MCF 10A (cell line): ENCODE measurements at regions of chr1 and their contacts with region 1.

Region 1: DNA sequence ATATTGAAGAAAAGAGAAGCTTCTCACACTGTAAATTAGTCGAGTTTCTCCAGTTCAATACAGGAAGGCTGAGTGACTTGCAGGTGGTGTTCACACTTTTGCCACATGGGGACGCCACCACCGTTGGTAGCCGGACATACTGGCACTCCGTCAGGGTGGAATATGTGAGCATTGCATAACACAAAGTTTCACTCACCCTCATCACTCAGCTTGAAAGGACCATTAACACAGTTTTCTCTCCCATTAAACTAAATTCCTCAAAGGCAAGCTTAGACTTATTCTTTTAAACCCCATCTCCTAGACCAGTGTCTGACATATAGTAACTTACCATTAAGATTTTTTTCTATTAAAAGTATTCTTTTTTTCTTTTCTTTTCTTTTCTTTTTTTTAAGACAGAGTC is 105.3 kb upstream of the SERBP1 start:
- DNase-seq: peak; percentile 85
- H3K4me3 Mint-ChIP-seq: no peak overlapping the region
- H3K27ac Mint-ChIP-seq: peak overlapping the region; percentile 12
- H3K4me1 Mint-ChIP-seq: peaks cover 6% of the 10 kb centered on the region
- H3K27me3 Mint-ChIP-seq: no peaks in the 10 kb centered on the region
- CTCF ChIP-seq: peak; percentile 95

Region 2: GRCh38 chr1:67393240-67393639 is 142.2 kb before region 1 on chr1:
- CTCF ChIA-PET with region 1: no interaction called
- POLR2A ChIA-PET with region 1: no interaction called
- intact Hi-C with region 1: no loop called
- DNase-seq: no peak
- H3K4me3 Mint-ChIP-seq: no peak overlapping the region
- H3K27ac Mint-ChIP-seq: no peak overlapping the region
- H3K4me1 Mint-ChIP-seq: peaks cover 12% of the 10 kb centered on the region
- H3K27me3 Mint-ChIP-seq: no peaks in the 10 kb centered on the region
- CTCF ChIP-seq: no peak

Region 3: GRCh38 chr1:67552336-67552759 is 16.9 kb after region 1 on chr1:
- CTCF ChIA-PET with region 1: interaction called, 30 read pairs
- POLR2A ChIA-PET with region 1: interaction called, 5 read pairs
- intact Hi-C with region 1: no loop called
- DNase-seq: peak; percentile 50
- H3K4me3 Mint-ChIP-seq: no peak overlapping the region
- H3K27ac Mint-ChIP-seq: no peak overlapping the region
- H3K4me1 Mint-ChIP-seq: peaks cover 6% of the 10 kb centered on the region
- H3K27me3 Mint-ChIP-seq: no peaks in the 10 kb centered on the region
- CTCF ChIP-seq: no peak

Region 4: DNA sequence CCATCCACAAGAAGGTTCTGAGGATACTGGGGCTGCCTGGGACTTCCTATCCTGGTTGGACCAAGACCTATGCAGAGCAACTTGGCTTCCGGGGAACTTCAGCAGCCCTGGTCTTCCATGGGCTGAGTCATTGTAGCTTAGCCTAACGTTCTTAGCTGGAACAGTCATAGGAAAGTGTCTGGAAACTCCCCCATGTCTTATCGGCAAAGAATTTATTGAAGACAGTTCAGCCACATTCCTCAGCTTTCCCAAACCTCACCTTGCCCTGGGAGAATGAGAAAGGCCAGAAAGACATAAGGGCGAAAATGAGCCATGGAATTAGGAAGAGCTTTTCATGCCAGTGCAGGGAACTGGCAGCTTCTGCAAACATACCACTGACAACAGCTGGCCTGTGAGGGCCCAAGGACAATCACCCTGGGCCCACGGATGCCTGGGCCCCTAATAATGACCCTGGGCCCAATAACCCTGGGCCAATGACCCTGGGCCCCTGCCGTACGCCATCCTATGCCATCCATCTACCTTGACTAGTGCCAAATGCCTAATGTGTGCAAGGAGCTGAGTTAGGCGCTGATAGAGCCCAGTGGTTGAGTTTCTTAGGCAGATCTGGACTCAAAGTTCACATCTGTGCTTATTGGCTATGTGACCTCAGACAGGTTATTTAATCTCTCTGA is 35.1 kb after region 1 on chr1:
- CTCF ChIA-PET with region 1: interaction called, 48 read pairs
- POLR2A ChIA-PET with region 1: interaction called, 3 read pairs
- intact Hi-C with region 1: no loop called
- DNase-seq: peak; percentile 80
- H3K4me3 Mint-ChIP-seq: no peak overlapping the region
- H3K27ac Mint-ChIP-seq: peak overlapping the region; percentile 76
- H3K4me1 Mint-ChIP-seq: peaks cover 48% of the 10 kb centered on the region
- H3K27me3 Mint-ChIP-seq: no peaks in the 10 kb centered on the region
- CTCF ChIP-seq: no peak

Region 5: GRCh38 chr1:67832737-67833601 is 297.5 kb after region 1 on chr1 and contains the start of gene GNG12:
- CTCF ChIA-PET with region 1: interaction called, 6 read pairs
- POLR2A ChIA-PET with region 1: interaction called, 3 read pairs
- intact Hi-C with region 1: loop called (anchors 5 kb)
- DNase-seq: peak; percentile 83
- H3K4me3 Mint-ChIP-seq: peak within 1 kb of the TSS; percentile 92
- H3K27ac Mint-ChIP-seq: peak within 1 kb of the TSS; percentile 99
- H3K4me1 Mint-ChIP-seq: peaks cover 28% of the 10 kb centered on the region
- H3K27me3 Mint-ChIP-seq: no peaks in the 10 kb centered on the region
- CTCF ChIP-seq: no peak
- total RNA-seq, gene GNG12: 117 and 135 TPM in 2 replicates

Region 6: DNA sequence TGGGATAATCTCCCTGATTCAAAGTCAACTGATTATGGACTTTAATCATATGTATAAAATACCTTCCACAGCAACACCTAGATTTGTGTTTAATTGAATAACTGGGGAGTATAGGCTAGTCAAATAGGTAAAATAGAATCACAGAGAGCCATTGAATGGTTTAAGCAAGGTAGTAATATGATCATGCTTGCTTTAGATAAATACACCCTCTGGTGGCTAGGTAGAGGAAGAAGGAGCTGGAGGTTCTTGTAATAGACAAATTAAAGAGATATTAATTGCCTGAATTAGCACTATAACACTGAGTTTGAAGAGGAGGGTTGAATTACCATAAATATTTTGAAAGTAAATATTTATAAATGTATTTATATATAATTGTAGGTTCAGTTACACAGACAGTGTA is 474.6 kb after region 1 on chr1:
- CTCF ChIA-PET with region 1: interaction called, 6 read pairs
- POLR2A ChIA-PET with region 1: no interaction called
- intact Hi-C with region 1: loop called (anchors 5 kb)
- DNase-seq: peak; percentile 40
- H3K4me3 Mint-ChIP-seq: no peak overlapping the region
- H3K27ac Mint-ChIP-seq: no peak overlapping the region
- H3K4me1 Mint-ChIP-seq: no peaks in the 10 kb centered on the region
- H3K27me3 Mint-ChIP-seq: no peaks in the 10 kb centered on the region
- CTCF ChIP-seq: peak; percentile 34